ENCODE measurements at regions of chr10 and their contacts with region 1.

Region 1: GRCh38 chr10:48940958-48941357 is 1.3 kb upstream of the LRRC18 start:
- DNase-seq: no peak
- H3K4me3 ChIP-seq: no peak overlapping the region
- H3K27ac ChIP-seq: no peak overlapping the region
- H3K4me1 ChIP-seq: no peaks in the 10 kb centered on the region
- H3K27me3 ChIP-seq: no peaks in the 10 kb centered on the region
- CTCF ChIP-seq: no peak
- EP300 ChIP-seq: no peak
- POLR2A ChIP-seq: no peak

Region 2: DNA sequence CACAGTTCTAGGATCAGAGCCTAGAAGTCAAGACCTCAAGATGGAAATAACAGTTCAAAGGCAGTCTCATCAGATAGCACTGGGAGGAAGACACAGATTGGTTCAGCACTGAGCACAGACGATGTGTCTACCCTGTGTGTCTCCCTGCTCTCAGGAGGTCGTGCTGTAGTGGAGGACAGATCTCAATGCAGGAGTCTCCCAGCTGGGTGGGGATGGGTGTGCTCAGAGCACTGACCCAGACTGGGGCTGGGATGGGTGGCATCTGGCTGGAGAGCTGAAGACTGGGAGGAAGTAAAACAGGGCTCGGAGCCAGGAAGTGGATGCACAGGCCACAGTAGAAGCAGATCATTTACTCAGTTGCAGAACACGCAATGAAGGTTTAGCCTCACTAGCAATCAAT is 1710.5 kb before region 1 on chr10:
- intact Hi-C with region 1: loop called in 1 of 4 experiments (anchors 5 kb)
- DNase-seq: no peak
- H3K4me3 ChIP-seq: no peak overlapping the region
- H3K27ac ChIP-seq: no peak overlapping the region
- H3K4me1 ChIP-seq: no peaks in the 10 kb centered on the region
- H3K27me3 ChIP-seq: no peaks in the 10 kb centered on the region
- CTCF ChIP-seq: no peak
- EP300 ChIP-seq: no peak
- POLR2A ChIP-seq: no peak

Region 3: GRCh38 chr10:48577158-48577557 is 363.8 kb before region 1 on chr10:
- intact Hi-C with region 1: no loop called
- DNase-seq: no peak
- H3K4me3 ChIP-seq: no peak overlapping the region
- H3K27ac ChIP-seq: no peak overlapping the region
- H3K4me1 ChIP-seq: peaks cover 3% of the 10 kb centered on the region
- H3K27me3 ChIP-seq: no peaks in the 10 kb centered on the region
- CTCF ChIP-seq: no peak
- EP300 ChIP-seq: no peak
- POLR2A ChIP-seq: no peak

Region 4: GRCh38 chr10:48656241-48656913 is 284.6 kb before region 1 on chr10:
- intact Hi-C with region 1: no loop called
- DNase-seq: peak; percentile 83 to 96 (median 92)
- H3K4me3 ChIP-seq: peak overlapping the region; percentile 44
- H3K27ac ChIP-seq: no peak overlapping the region
- H3K4me1 ChIP-seq: no peaks in the 10 kb centered on the region
- H3K27me3 ChIP-seq: no peaks in the 10 kb centered on the region
- CTCF ChIP-seq: peak; percentile 92 to 99 (median 96)
- EP300 ChIP-seq: no peak
- POLR2A ChIP-seq: no peak

Region 5: GRCh38 chr10:49056356-49056755 is 115.4 kb after region 1 on chr10:
- intact Hi-C with region 1: no loop called
- DNase-seq: no peak
- H3K4me3 ChIP-seq: no peak overlapping the region
- H3K27ac ChIP-seq: no peak overlapping the region
- H3K4me1 ChIP-seq: peaks cover 29% of the 10 kb centered on the region
- H3K27me3 ChIP-seq: no peaks in the 10 kb centered on the region
- CTCF ChIP-seq: no peak
- EP300 ChIP-seq: no peak
- POLR2A ChIP-seq: no peak

Measured in ovary (tissue), 10 donors.